Lower lobe of right lung (tissue), 2 donors: ENCODE measurements at regions of chr16 and their contacts with region 1.

Region 1: GRCh38 chr16:77171745-77172635 is 19.0 kb upstream of the MON1B start:
- DNase-seq: no peak
- ATAC-seq: peak; percentile 78 to 85
- H3K4me3 ChIP-seq: no peak overlapping the region
- H3K27ac ChIP-seq: no peak overlapping the region
- H3K4me1 ChIP-seq: no peaks in the 10 kb centered on the region
- H3K27me3 ChIP-seq: peaks cover 11% of the 10 kb centered on the region
- CTCF ChIP-seq: peak; percentile 69

Region 2: GRCh38 chr16:75794426-75794825 is 1377.6 kb before region 1 on chr16:
- intact Hi-C with region 1: loop called (anchors 10 kb)
- DNase-seq: no peak
- ATAC-seq: no peak
- H3K4me3 ChIP-seq: no peak overlapping the region
- H3K27ac ChIP-seq: no peak overlapping the region
- H3K4me1 ChIP-seq: no peaks in the 10 kb centered on the region
- H3K27me3 ChIP-seq: no peaks in the 10 kb centered on the region
- CTCF ChIP-seq: no peak

Region 3: DNA sequence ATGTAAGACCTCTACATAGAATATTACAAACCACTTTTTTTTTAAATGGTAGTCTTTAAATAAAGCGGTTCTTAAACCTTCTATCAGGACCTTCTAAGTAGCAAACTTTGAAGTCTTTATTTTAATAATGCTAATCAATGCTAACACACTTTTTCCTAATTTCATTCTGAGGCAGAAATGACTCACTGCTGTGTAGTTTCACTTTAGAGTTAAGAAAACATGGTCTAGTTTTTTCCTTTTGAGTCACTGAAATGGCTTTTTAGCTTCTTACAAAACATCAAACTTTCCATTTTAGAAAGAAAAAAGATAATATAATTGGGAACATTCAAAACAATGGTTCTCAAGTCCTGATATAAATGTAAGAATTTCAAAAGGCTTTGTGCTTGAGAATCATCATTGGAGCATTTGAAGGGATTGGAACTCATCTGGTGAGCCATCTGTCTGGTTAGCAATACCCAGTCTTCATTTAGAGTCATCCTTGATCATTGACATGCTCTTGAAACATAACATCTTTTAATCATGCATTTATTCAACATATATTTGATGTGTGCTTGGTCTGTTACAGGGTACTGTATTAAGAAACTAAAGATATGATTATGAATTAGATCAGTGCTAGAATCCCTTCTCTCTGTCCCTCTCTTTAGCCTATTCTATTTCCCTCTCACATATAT is 239.3 kb before region 1 on chr16:
- intact Hi-C with region 1: no loop called
- DNase-seq: no peak
- ATAC-seq: no peak
- H3K4me3 ChIP-seq: no peak overlapping the region
- H3K27ac ChIP-seq: no peak overlapping the region
- H3K4me1 ChIP-seq: no peaks in the 10 kb centered on the region
- H3K27me3 ChIP-seq: no peaks in the 10 kb centered on the region
- CTCF ChIP-seq: no peak

Region 4: DNA sequence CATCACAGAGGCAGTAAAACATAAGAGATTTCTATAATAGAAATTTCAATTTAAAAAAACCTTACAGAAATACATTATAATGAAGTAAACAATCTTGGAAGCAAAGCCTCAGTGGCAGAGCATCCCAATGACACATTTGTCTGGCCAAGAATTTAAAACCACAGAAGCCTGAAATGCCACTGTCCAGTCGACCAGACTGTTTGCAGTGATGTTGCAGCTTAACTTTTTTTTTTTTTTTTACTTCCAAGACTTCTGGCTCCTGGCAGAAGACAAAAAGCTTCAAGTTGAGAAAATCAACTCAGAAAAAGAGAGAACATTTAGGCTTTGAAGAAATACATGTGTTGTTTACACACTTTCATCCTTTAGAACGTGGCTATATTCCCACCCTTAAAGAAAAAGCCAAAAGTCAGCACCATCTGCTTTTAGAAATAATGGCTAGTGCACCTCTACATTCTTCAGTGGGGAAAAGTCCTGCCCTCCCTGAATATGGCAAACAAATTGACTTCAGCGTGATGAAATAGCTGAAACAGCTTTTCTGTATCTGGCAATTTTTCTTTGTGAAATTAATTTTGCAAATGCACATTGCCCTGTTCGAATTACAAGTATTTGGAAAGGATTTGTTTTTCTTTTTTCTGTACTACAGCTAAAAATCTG is 186.5 kb before region 1 on chr16:
- intact Hi-C with region 1: no loop called
- DNase-seq: no peak
- ATAC-seq: no peak
- H3K4me3 ChIP-seq: no peak overlapping the region
- H3K27ac ChIP-seq: no peak overlapping the region
- H3K4me1 ChIP-seq: no peaks in the 10 kb centered on the region
- H3K27me3 ChIP-seq: no peaks in the 10 kb centered on the region
- CTCF ChIP-seq: no peak

Region 5: DNA sequence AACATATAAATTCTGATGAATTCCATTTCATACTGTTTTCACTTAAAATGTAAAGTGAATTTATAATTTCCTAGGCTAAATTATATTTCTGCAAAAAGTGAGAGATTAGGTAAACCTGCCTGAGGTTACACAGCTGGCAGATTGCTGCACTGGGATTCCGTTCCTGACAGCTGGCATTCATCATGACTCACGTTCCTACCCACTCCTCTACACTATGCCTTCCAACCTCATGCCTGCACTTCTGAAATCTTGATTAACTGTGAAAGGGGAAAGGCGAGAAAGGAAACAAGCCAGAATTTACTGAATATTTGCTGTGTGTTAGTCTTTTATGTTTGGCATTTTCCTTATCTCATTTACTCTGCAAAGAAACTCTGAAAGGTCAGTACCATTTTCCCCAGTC is 54.3 kb before region 1 on chr16:
- intact Hi-C with region 1: no loop called
- DNase-seq: no peak
- ATAC-seq: peak in 1 of 2 donors; percentile 36
- H3K4me3 ChIP-seq: no peak overlapping the region
- H3K27ac ChIP-seq: no peak overlapping the region
- H3K4me1 ChIP-seq: no peaks in the 10 kb centered on the region
- H3K27me3 ChIP-seq: no peaks in the 10 kb centered on the region
- CTCF ChIP-seq: no peak

Region 6: GRCh38 chr16:77424871-77425604 is 253.0 kb after region 1 on chr16:
- intact Hi-C with region 1: no loop called
- DNase-seq: no peak
- ATAC-seq: no peak
- H3K4me3 ChIP-seq: no peak overlapping the region
- H3K27ac ChIP-seq: no peak overlapping the region
- H3K4me1 ChIP-seq: no peaks in the 10 kb centered on the region
- H3K27me3 ChIP-seq: no peaks in the 10 kb centered on the region
- CTCF ChIP-seq: no peak